ENCODE measurements at regions of chr5 and their contacts with region 1.

Region 1: DNA sequence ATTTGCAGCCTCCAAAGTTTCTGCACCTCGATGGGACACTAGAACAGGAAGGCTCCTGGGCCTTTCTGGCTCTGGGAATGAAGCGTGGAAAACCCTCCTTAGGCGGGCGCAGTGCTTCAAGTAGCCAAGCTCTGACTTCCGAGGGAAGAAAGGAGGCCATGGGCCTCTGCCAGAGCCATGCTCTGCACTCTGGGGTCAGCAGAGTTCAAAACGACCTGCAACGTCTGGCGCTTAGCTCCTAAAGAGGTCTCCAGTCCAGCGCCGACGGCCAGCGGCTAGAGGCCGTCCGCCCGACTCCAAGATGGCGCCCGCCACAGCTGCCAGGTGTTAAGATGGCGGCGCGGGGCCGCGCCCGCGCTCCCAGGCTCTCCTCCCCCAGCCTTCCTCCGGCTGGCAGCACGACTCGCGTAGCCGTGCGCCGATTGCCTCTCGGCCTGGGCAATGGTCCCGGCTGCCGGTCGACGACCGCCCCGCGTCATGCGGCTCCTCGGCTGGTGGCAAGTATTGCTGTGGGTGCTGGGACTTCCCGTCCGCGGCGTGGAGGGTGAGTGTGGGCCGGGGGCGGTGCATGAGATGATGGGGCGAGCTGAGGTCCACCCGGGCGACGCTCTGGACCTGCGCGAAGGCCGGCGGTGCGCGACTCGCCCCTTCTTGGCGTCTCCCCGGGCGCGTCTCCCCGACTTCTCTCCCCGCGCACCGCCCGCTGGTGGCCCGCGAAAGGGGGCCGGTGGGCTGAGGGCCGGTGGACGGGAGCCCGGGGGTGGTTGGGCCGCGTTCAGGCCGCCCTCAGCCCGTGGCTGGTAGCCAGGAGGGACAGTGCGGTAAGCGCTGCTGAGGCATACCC is at the start of gene TXNDC15:
- DNase-seq: peak; percentile 56 to 88 (median 75)
- ATAC-seq: peak; percentile 95 to 97 (median 96)
- H3K4me3 ChIP-seq: peak within 1 kb of the TSS; percentile 70 to 80
- H3K4me3 Mint-ChIP-seq: peak within 1 kb of the TSS; percentile 90 to 93 (median 92)
- H3K27ac ChIP-seq: peak within 1 kb of the TSS; percentile 91
- H3K27ac Mint-ChIP-seq: peak within 1 kb of the TSS; percentile 87 to 96
- H3K4me1 ChIP-seq: peaks cover 0 to 44% of the 10 kb centered on the region in 2 experiments
- H3K4me1 Mint-ChIP-seq: peaks cover 42 to 52% (median 48%) of the 10 kb centered on the region in 3 donors
- H3K27me3 ChIP-seq: no peaks in the 10 kb centered on the region
- H3K27me3 Mint-ChIP-seq: no peaks in the 10 kb centered on the region
- total RNA-seq, gene TXNDC15: 25.5 to 49.1 (median 38.4) TPM

Region 2: DNA sequence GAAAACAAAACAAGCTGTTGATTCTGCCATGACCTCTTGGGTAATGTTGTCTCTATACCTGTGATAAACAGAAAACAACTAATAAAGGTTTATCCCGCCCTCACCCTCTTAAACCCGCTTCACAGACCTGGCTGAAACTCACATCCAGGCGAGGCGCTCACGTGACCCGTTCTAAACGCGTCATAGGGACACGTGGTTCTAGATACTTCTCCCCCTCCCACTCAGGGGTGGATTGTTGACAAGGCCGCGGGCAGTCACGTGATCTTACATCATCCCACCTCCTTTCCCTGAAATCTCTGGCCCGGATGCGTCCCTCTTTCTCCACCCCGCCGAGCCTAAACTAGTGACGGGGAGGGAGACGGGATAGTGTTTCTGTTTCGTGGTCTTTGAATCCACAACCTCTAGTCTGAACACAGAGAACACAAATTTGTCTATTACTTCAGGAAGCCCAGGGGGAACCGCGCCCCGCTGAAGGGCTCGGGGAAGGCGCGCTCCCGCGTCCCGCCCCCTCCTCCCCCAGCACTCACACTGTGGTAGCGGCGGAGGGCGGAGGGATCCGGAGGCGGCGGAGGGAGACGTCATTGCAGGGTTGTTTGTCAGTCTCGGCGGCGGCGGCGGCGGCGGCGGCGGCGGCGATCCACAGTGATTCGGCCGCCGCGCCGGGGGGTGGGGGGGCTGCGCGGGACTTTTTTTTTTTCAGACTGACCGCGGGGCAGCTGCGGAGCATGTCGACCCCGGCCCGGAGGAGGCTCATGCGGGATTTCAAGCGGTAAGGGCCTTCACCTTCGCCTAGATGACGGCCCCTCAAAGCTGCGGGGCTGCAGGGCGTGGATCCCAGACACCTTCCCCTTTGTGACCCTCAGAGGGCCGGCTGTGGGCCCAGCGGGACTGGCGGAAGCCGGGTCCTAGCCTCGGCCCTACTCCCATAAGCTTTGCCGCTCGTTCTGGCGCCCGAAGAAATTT is 503.1 kb before region 1 on chr5 and contains the start of gene UBE2B:
- CTCF ChIA-PET with region 1: no interaction called
- POLR2A ChIA-PET with region 1: interaction called in 1 of 2 experiments, 23 read pairs
- DNase-seq: peak; percentile 94 to 99 (median 97)
- ATAC-seq: peak; percentile 79 to 83 (median 80)
- H3K4me3 ChIP-seq: peak within 1 kb of the TSS; percentile 94 to 99
- H3K4me3 Mint-ChIP-seq: peak within 1 kb of the TSS; percentile 97 to 98 (median 97)
- H3K27ac ChIP-seq: peak within 1 kb of the TSS; percentile 99
- H3K27ac Mint-ChIP-seq: peak within 1 kb of the TSS; percentile 100
- H3K4me1 ChIP-seq: peaks cover 28 to 34% of the 10 kb centered on the region in 2 experiments
- H3K4me1 Mint-ChIP-seq: peaks cover 58 to 64% (median 60%) of the 10 kb centered on the region in 3 donors
- H3K27me3 ChIP-seq: no peaks in the 10 kb centered on the region
- H3K27me3 Mint-ChIP-seq: peaks cover 0 to 2% of the 10 kb centered on the region in 2 donors
- total RNA-seq, gene UBE2B: 97.2 to 135 (median 101) TPM